Right ventricle myocardium inferior (tissue), 1 donor: ENCODE measurements at regions of chr2 and their contacts with region 1.

Region 1: GRCh38 chr2:181058378-181059269 is 78.2 kb downstream of the UBE2E3 start:
- DNase-seq: no peak
- ATAC-seq: no peak

Region 2: GRCh38 chr2:180125245-180125962 is 933.2 kb before region 1 on chr2:
- intact Hi-C with region 1: loop called (anchors 2 kb)
- DNase-seq: peak; percentile 64
- ATAC-seq: peak; percentile 93